A549 (cell line): ENCODE measurements at regions of chr19 and their contacts with region 1.

Region 1: DNA sequence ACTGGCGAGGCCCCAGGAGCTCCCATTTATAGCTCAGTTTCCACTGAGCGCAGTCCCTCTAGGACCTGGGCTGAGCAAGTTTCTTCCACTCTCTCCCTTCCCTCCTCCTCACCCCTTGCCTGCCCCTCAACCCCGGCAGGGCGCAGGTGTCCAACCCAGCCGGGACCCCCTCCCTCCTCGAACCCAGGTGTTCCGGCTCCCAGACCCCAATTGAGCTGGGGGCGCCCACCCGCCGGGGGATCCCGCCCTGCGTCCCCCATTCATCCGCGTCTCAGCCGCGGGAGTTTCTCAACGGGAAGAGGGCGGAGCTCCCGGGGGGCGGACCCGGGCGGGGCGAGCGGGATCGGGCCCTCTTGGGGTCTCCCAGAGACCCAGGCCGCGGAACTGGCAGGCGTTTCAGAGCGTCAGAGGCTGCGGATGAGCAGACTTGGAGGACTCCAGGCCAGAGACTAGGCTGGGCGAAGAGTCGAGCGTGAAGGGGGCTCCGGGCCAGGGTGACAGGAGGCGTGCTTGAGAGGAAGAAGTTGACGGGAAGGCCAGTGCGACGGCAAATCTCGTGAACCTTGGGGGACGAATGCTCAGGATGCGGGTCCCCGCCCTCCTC is at the start of gene KIRREL2:
- DNase-seq: peak in 1 of 2 experiments; percentile 80
- ATAC-seq: peak; percentile 57 to 75
- H3K4me3 ChIP-seq: peak within 1 kb of the TSS; percentile 55
- H3K27ac ChIP-seq: peak within 1 kb of the TSS; percentile 45 to 78; a peak in 5 of 6 replicates
- H3K4me1 ChIP-seq: peaks cover 11% of the 10 kb centered on the region; the same call in 2 of the 3 replicates
- CTCF ChIP-seq: no peak
- EP300 ChIP-seq: no peak
- POLR2A ChIP-seq: no peak
- RAD21 ChIP-seq: no peak
- polyA plus RNA-seq, gene KIRREL2: 0.26 and 0.34 TPM in 2 replicates

Region 2: DNA sequence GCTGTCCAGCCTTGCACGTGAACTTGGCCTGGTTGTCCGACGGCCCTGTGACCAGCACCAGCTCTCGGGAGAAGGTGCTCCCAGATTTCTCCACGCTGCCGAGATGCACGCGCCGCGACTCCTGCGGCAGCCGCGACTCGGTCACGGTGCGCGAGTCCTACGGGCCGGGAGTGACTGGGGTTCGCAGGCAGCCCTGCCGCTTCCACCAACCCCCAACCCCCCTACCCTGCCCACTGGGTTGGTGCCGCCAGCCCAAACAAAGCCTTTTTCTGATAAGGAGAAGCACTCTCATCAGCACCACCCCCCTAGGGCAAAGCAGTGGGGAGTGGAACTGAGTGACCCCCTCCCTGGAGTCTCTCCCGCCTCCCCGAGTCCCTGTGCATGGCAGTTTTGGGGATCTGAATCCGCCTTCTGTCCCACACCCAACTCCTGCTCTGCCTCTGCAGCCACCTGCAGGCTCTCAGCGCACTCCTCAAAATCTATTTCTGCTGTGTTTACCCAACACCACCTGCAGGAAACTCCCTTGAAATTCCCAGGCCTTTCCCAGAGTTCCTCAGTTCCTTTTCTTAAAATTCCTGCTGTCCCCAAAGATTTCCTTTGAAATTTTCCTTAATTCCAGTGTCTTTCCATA is 10.5 kb before region 1 on chr19:
- CTCF ChIA-PET with region 1: interaction called, 23 read pairs
- POLR2A ChIA-PET with region 1: interaction called, 3 read pairs
- DNase-seq: peak; percentile 58 to 88
- ATAC-seq: peak; percentile 44 to 48
- H3K4me3 ChIP-seq: peak overlapping the region; percentile 49
- H3K27ac ChIP-seq: peak overlapping the region; percentile 17 to 65; a peak in 4 of 6 replicates
- H3K4me1 ChIP-seq: peaks cover 28% of the 10 kb centered on the region; the same call in 2 of the 3 replicates
- CTCF ChIP-seq: peak; percentile 18; the same call in 2 of the 3 replicates
- EP300 ChIP-seq: no peak
- POLR2A ChIP-seq: no peak
- RAD21 ChIP-seq: peak; percentile 24 to 27; a peak in 4 of 5 replicates

Region 3: DNA sequence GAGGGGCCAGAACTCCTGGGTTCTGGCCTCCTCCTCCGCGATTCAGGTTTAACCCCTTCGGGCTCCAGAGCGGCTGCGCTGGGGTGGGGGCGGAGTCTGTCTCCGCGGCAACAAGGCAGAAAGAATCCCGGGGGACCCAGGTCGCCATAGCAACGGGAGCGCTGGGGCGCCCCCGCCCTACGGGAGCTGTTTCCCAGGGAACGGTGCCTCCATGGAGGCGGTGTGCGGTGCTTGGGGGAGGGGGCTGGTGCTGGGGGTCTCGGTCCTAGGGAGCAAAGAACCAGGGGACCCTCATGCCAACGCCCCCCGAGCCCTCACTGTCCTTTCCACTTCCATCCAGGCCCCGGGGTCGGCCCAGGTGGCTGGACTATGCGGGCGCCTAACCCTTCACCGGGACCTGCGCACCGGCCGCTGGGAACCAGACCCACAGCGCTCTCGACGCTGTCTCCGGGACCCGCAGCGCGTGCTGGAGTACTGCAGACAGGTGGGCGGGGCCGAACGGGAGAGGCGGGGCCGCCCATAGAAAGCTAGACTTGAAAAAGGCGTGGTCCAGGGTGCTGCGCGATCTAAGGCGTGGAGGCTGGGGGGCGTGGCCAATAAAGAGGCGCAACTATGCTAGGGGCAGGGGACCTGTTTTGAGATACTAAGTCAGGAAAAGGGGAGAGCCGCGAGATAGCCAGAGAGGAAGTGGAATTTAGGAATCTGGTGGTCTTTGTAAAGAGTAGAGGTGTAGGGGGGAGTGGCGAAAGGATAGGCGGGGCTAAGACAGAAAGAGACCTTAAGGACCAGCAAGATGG is 12.9 kb after region 1 on chr19:
- CTCF ChIA-PET with region 1: interaction called, 7 read pairs
- POLR2A ChIA-PET with region 1: interaction called, 13 read pairs
- DNase-seq: peak; percentile 94 to 98
- ATAC-seq: peak; percentile 70 to 88
- H3K4me3 ChIP-seq: peak overlapping the region; percentile 59
- H3K27ac ChIP-seq: peak overlapping the region; percentile 53 to 80
- H3K4me1 ChIP-seq: peaks cover 19% of the 10 kb centered on the region
- CTCF ChIP-seq: no peak
- EP300 ChIP-seq: no peak
- POLR2A ChIP-seq: peak; percentile 30; the same call in 1 of the 2 replicates
- RAD21 ChIP-seq: no peak